ENCODE measurements at regions of chr3 and their contacts with region 1.

Region 1: GRCh38 chr3:86990734-86991481 is at the start of gene VGLL3:
- DNase-seq: peak; percentile 84 to 92
- ATAC-seq: peak; percentile 89
- H3K4me3 ChIP-seq: peak within 1 kb of the TSS; percentile 80 to 89
- H3K27ac ChIP-seq: peak within 1 kb of the TSS; percentile 47 to 87
- H3K4me1 ChIP-seq: peaks cover 1 to 3% of the 10 kb centered on the region in 2 donors
- H3K27me3 ChIP-seq: no peaks in the 10 kb centered on the region
- total RNA-seq, gene VGLL3: 49.8 to 155 TPM

Region 2: DNA sequence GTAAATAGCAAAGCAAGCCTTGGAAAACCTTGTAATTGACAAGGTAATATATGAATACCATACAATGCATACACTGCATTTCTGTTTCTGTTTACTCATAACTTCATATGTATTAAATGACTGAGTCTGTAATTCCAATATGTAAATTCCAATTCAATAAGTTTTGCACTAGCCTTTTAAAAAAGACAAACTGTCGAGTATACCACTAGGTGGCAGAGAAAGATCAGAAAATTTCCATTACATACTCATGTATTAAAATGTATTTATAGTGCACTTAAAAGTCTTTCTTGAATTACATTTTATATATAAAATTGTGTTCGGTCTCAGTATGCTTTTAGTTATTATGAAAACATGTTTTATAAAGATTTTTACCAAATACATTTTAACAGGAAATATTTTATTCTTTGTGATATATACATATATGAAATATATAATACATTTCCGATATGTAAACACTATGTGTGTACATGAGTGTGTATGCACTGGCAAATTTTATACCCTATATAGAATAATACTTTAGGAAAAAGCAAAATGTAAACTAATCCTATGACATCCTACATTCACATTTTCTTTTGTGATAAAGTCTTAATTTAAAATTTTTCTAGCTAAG is 216.7 kb before region 1 on chr3:
- intact Hi-C with region 1: no loop called
- DNase-seq: no peak
- ATAC-seq: no peak
- H3K4me3 ChIP-seq: no peak overlapping the region
- H3K27ac ChIP-seq: no peak overlapping the region
- H3K4me1 ChIP-seq: no peaks in the 10 kb centered on the region
- H3K27me3 ChIP-seq: no peaks in the 10 kb centered on the region

Region 3: DNA sequence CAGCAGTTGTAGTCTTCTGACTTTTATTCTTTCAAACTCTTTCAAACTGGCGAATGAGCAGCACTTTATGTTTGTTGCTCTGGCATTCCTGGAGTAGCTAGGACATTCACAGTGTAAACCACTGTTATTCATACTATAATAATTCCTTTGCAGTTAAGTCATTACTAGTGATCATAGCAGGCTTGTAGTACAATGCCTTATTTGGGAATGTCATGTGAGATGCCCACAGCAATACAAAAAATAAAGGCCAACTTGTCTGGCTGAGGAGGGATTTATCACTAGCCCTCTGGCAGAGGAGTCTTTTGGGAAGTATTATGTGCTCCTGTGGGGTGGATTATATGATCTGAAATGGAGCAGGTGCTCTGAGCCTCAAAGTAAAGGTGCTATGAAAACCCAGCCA is 197.1 kb before region 1 on chr3:
- intact Hi-C with region 1: loop called in 1 of 2 experiments (anchors 5 kb)
- DNase-seq: no peak
- ATAC-seq: peak; percentile 92
- H3K4me3 ChIP-seq: no peak overlapping the region
- H3K27ac ChIP-seq: peak overlapping the region; percentile 79 to 93
- H3K4me1 ChIP-seq: peaks cover 0 to 3% of the 10 kb centered on the region in 2 donors
- H3K27me3 ChIP-seq: no peaks in the 10 kb centered on the region

Region 4: GRCh38 chr3:86937305-86937791 is 53.6 kb before region 1 on chr3:
- intact Hi-C with region 1: loop called in 1 of 2 experiments (anchors 5 kb)
- DNase-seq: peak in 1 of 2 donors; percentile 64
- ATAC-seq: peak; percentile 68
- H3K4me3 ChIP-seq: no peak overlapping the region
- H3K27ac ChIP-seq: peak overlapping the region; percentile 57 to 83
- H3K4me1 ChIP-seq: peaks cover 0 to 5% of the 10 kb centered on the region in 2 donors
- H3K27me3 ChIP-seq: no peaks in the 10 kb centered on the region

Region 5: GRCh38 chr3:87082796-87083440 is 92.0 kb after region 1 on chr3:
- intact Hi-C with region 1: loop called (anchors 2 to 5 kb)
- DNase-seq: no peak
- ATAC-seq: peak; percentile 90
- H3K4me3 ChIP-seq: no peak overlapping the region
- H3K27ac ChIP-seq: no peak overlapping the region
- H3K4me1 ChIP-seq: no peaks in the 10 kb centered on the region
- H3K27me3 ChIP-seq: no peaks in the 10 kb centered on the region